ENCODE measurements at regions of chr12 and their contacts with region 1.

Region 1: GRCh38 chr12:121753844-121754264 is 39.6 kb downstream of the RHOF start:
- DNase-seq: no peak
- H3K4me3 Mint-ChIP-seq: no peak overlapping the region
- H3K27ac Mint-ChIP-seq: no peak overlapping the region
- H3K4me1 Mint-ChIP-seq: peaks cover 14% of the 10 kb centered on the region
- H3K27me3 Mint-ChIP-seq: no peaks in the 10 kb centered on the region

Region 2: DNA sequence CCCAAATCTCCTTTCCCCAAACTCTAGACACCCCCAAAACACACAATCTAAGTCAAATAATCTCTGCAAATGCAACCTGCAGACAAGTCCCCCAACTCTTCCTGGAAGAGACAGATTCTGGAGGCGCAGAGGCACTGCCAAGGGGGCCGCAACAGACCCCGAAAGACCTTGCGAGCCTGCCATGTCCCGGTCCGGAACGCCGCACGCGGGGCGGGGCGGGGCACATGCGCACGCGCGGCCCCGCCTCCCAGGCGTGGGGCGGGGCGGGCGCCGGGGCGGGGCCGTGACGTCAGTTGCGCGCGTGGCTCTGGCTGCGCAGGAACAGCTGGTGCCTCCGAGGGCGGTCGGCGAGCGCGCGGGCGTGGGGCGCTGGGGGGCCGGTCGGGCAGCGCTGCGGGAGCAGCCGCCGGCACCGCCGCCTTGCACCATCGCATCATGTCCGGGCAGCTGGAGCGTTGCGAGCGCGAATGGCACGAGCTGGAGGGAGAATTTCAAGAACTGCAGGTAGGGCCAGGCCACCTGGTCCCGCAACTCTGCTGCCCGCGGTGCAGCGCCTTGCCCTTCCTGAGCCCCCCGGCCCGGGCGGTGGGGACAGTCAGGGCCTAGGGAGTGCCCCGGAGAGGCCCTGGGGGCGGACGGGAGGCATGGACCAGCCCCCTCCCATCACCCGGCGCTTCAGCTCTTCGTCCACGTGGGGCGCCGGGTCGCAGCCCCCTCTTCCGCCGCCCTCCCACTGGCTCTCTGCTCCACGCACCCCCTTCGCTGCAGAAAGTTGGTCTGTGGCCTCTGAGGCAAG is 41.2 kb before region 1 on chr12 and contains the start of gene TMEM120B:
- intact Hi-C with region 1: loop called (anchors 2 kb)
- DNase-seq: peak; percentile 96
- H3K4me3 Mint-ChIP-seq: peak within 1 kb of the TSS; percentile 90
- H3K27ac Mint-ChIP-seq: peak within 1 kb of the TSS; percentile 96
- H3K4me1 Mint-ChIP-seq: peaks cover 25% of the 10 kb centered on the region
- H3K27me3 Mint-ChIP-seq: no peaks in the 10 kb centered on the region
- total RNA-seq, gene TMEM120B: 17.1 and 18.4 TPM in 2 replicates

Measured in activated CD4-positive, alpha-beta T cell treated with anti-CD3 and anti-CD28 coated beads, Interleukin-2, amount 10 ng/mL, durations not matched to agents 24 days and 14 days (primary cell).